ENCODE measurements at regions of chr14 and their contacts with region 1.

Region 1: GRCh38 chr14:98926146-98926545 is 345.9 kb downstream of the BCL11B start:
- DNase-seq: peak; percentile 64
- H3K4me3 Mint-ChIP-seq: peak overlapping the region; percentile 34
- H3K27ac Mint-ChIP-seq: peak overlapping the region; percentile 14
- H3K4me1 Mint-ChIP-seq: peaks cover 44% of the 10 kb centered on the region
- H3K27me3 Mint-ChIP-seq: no peaks in the 10 kb centered on the region

Region 2: GRCh38 chr14:98766818-98767217 is 159.3 kb before region 1 on chr14:
- CTCF ChIA-PET with region 1: no interaction called
- intact Hi-C with region 1: no loop called
- DNase-seq: no peak
- H3K4me3 Mint-ChIP-seq: no peak overlapping the region
- H3K27ac Mint-ChIP-seq: no peak overlapping the region
- H3K4me1 Mint-ChIP-seq: peaks cover 7% of the 10 kb centered on the region
- H3K27me3 Mint-ChIP-seq: no peaks in the 10 kb centered on the region

Region 3: GRCh38 chr14:98786456-98786855 is 139.7 kb before region 1 on chr14:
- CTCF ChIA-PET with region 1: no interaction called
- intact Hi-C with region 1: no loop called
- DNase-seq: no peak
- H3K4me3 Mint-ChIP-seq: no peak overlapping the region
- H3K27ac Mint-ChIP-seq: no peak overlapping the region
- H3K4me1 Mint-ChIP-seq: no peaks in the 10 kb centered on the region
- H3K27me3 Mint-ChIP-seq: no peaks in the 10 kb centered on the region

Region 4: GRCh38 chr14:98906123-98906995 is 19.8 kb before region 1 on chr14:
- CTCF ChIA-PET with region 1: no interaction called
- intact Hi-C with region 1: no loop called
- DNase-seq: no peak
- H3K4me3 Mint-ChIP-seq: no peak overlapping the region
- H3K27ac Mint-ChIP-seq: no peak overlapping the region
- H3K4me1 Mint-ChIP-seq: peaks cover 2% of the 10 kb centered on the region
- H3K27me3 Mint-ChIP-seq: no peaks in the 10 kb centered on the region

Region 5: GRCh38 chr14:98957211-98958047 is 31.3 kb after region 1 on chr14:
- CTCF ChIA-PET with region 1: no interaction called
- intact Hi-C with region 1: no loop called
- DNase-seq: no peak
- H3K4me3 Mint-ChIP-seq: no peak overlapping the region
- H3K27ac Mint-ChIP-seq: no peak overlapping the region
- H3K4me1 Mint-ChIP-seq: peaks cover 9% of the 10 kb centered on the region
- H3K27me3 Mint-ChIP-seq: no peaks in the 10 kb centered on the region

Region 6: GRCh38 chr14:99177886-99178835 is 252.0 kb after region 1 on chr14:
- CTCF ChIA-PET with region 1: no interaction called
- intact Hi-C with region 1: loop called (anchors 5 kb)
- DNase-seq: no peak
- H3K4me3 Mint-ChIP-seq: no peak overlapping the region
- H3K27ac Mint-ChIP-seq: peak overlapping the region; percentile 95
- H3K4me1 Mint-ChIP-seq: peaks cover 53% of the 10 kb centered on the region
- H3K27me3 Mint-ChIP-seq: no peaks in the 10 kb centered on the region

Measured in activated naive CD4-positive, alpha-beta T cell treated with anti-CD3 and anti-CD28 coated beads for 36 hours (primary cell).